WTC11 (cell line): ENCODE measurements at regions of chr6 and their contacts with region 1.

Region 1: GRCh38 chr6:127855542-127856159 is 45.2 kb downstream of the THEMIS start:
- DNase-seq: peak; percentile 11
- ATAC-seq: no peak
- H3K4me3 Mint-ChIP-seq: no peak overlapping the region
- H3K27ac Mint-ChIP-seq: no peak overlapping the region
- H3K4me1 Mint-ChIP-seq: peaks cover 11% of the 10 kb centered on the region
- H3K27me3 Mint-ChIP-seq: no peaks in the 10 kb centered on the region
- CTCF ChIP-seq: peak; percentile 30; the same call in 1 of the 2 replicates

Region 2: DNA sequence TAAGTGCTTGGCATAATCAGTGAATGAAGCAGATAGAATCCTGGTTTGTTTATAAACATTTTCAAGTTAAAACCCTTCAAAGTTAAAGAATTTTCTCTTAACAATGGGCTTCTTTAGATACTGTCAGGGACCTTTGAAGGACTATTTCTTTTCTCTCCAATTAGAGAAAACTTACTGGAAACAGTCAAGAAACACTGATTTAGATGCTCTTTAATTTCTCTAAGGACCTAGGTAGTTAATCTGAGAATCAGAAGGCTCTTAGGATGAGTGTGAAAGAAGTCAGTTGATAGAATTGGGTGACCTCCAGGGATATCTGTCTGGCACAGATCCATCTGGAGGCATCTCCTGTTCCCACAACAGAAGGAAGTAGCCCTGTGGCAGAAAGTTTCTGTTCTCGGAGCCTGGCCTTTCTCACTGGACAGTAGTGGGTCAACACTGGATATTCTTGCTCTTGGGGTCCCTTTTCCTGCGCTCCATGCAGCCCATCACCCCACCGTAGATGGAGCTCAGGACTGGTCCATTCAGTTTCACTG is 419.0 kb before region 1 on chr6:
- CTCF ChIA-PET with region 1: no interaction called
- POLR2A ChIA-PET with region 1: no interaction called
- DNase-seq: no peak
- ATAC-seq: no peak
- H3K4me3 Mint-ChIP-seq: no peak overlapping the region
- H3K27ac Mint-ChIP-seq: no peak overlapping the region
- H3K4me1 Mint-ChIP-seq: no peaks in the 10 kb centered on the region
- H3K27me3 Mint-ChIP-seq: no peaks in the 10 kb centered on the region
- CTCF ChIP-seq: no peak

Region 3: GRCh38 chr6:127879685-127880084 is 24.0 kb after region 1 on chr6:
- CTCF ChIA-PET with region 1: interaction called, 12 read pairs
- POLR2A ChIA-PET with region 1: no interaction called
- DNase-seq: peak; percentile 81
- ATAC-seq: peak; percentile 99
- H3K4me3 Mint-ChIP-seq: peak overlapping the region; percentile 48
- H3K27ac Mint-ChIP-seq: no peak overlapping the region
- H3K4me1 Mint-ChIP-seq: peaks cover 17% of the 10 kb centered on the region
- H3K27me3 Mint-ChIP-seq: no peaks in the 10 kb centered on the region
- CTCF ChIP-seq: no peak

Region 4: DNA sequence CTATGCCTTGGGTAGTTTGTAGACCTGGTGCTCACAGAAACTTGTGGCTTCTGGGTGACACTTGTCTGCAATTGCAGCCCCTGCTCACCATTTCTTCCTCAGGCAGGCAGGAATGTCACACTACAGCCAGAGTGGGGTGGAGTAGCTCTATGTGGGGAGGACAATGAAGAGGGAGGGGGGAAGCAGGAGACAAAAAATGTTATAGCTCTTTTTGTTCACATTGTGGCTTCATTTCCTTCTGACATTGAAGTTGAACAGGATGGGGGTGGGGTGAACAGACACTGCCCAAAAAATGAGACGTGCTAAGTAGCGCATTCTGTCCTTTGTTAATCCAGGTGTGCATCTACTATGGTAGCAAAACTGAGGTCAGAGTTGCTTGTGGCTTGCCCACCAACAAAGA is 45.3 kb after region 1 on chr6 and contains the start of gene THEMIS:
- CTCF ChIA-PET with region 1: no interaction called
- POLR2A ChIA-PET with region 1: no interaction called
- DNase-seq: no peak
- ATAC-seq: peak; percentile 36
- H3K4me3 Mint-ChIP-seq: no peak within 1 kb of the TSS
- H3K27ac Mint-ChIP-seq: no peak within 1 kb of the TSS
- H3K4me1 Mint-ChIP-seq: peaks cover 5% of the 10 kb centered on the region
- H3K27me3 Mint-ChIP-seq: no peaks in the 10 kb centered on the region
- CTCF ChIP-seq: no peak
- total RNA-seq, gene THEMIS: 0.39 TPM in 1 of 3 replicates, not detected in the others

Region 5: GRCh38 chr6:128327890-128328289 is 472.2 kb after region 1 on chr6:
- CTCF ChIA-PET with region 1: interaction called, 27 read pairs
- POLR2A ChIA-PET with region 1: interaction called, 3 read pairs
- DNase-seq: peak; percentile 22
- ATAC-seq: peak; percentile 96
- H3K4me3 Mint-ChIP-seq: no peak overlapping the region
- H3K27ac Mint-ChIP-seq: no peak overlapping the region
- H3K4me1 Mint-ChIP-seq: peaks cover 16% of the 10 kb centered on the region
- H3K27me3 Mint-ChIP-seq: no peaks in the 10 kb centered on the region
- CTCF ChIP-seq: peak; percentile 47

Region 6: GRCh38 chr6:128731249-128732165 is 875.9 kb after region 1 on chr6:
- CTCF ChIA-PET with region 1: interaction called, 11 read pairs
- POLR2A ChIA-PET with region 1: no interaction called
- DNase-seq: no peak
- ATAC-seq: peak; percentile 95
- H3K4me3 Mint-ChIP-seq: no peak overlapping the region
- H3K27ac Mint-ChIP-seq: no peak overlapping the region
- H3K4me1 Mint-ChIP-seq: peaks cover 27% of the 10 kb centered on the region
- H3K27me3 Mint-ChIP-seq: no peaks in the 10 kb centered on the region
- CTCF ChIP-seq: peak; percentile 39; the same call in 1 of the 2 replicates